ENCODE measurements at regions of chr14 and their contacts with region 1.

Region 1: GRCh38 chr14:105168979-105169507 is 467 bp upstream of the JAG2 start:
- DNase-seq: no peak
- H3K4me3 ChIP-seq: peak overlapping the region; percentile 41 to 64 (median 42)
- H3K27ac ChIP-seq: no peak overlapping the region
- H3K4me1 ChIP-seq: peaks cover 37 to 55% (median 46%) of the 10 kb centered on the region in 4 donors
- H3K27me3 ChIP-seq: peaks cover 0 to 66% (median 6%) of the 10 kb centered on the region in 4 donors
- CTCF ChIP-seq: peak in 2 of 3 experiments; percentile 34 to 40
- EP300 ChIP-seq: no peak
- POLR2A ChIP-seq: no peak

Region 2: DNA sequence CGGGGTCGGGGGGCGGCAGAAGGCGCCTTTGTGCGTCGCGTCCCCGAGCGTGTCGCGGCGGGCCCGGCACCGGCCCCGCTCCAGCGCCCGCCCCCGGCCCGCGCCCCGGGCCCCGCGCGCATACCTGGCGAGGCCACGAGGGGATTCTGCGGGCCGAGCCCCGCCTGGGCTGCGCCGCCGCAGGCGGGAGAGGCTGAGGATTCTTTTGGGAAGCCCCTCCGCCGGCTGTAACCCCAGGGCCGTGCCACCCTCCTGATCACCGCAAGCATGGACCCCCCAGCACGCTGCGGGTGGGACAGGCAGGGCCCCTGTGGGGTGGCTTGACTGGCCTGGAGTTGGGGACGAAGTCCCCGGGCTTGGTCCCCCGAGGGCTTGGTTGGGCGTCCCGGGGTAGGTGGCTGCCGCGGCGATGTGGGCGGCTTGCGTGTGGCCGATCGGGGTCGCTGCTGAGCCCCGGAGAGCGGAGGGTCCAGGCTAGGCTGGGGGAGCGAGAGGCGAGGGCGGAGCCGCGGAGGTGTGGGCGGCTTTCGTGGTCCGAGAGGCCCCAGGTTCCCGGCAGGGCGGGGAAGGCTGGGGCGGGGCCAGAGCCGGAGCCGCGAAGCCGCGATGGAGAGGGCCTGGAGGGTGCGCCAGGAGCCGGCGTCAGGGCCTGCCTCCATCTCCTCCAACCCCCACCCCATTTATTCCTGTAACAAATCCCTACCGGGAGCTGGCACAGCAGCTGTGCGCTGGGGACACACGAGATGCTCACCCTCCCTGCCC is 75.4 kb before region 1 on chr14:
- intact Hi-C with region 1: loop called (anchors 5 kb)
- DNase-seq: no peak
- H3K4me3 ChIP-seq: peak overlapping the region; percentile 76 to 86 (median 83)
- H3K27ac ChIP-seq: peak overlapping the region; percentile 88 to 95 (median 92)
- H3K4me1 ChIP-seq: peaks cover 40 to 59% (median 53%) of the 10 kb centered on the region in 4 donors
- H3K27me3 ChIP-seq: no peaks in the 10 kb centered on the region
- CTCF ChIP-seq: peak; percentile 29 to 47 (median 32)
- EP300 ChIP-seq: no peak
- POLR2A ChIP-seq: no peak

Region 3: DNA sequence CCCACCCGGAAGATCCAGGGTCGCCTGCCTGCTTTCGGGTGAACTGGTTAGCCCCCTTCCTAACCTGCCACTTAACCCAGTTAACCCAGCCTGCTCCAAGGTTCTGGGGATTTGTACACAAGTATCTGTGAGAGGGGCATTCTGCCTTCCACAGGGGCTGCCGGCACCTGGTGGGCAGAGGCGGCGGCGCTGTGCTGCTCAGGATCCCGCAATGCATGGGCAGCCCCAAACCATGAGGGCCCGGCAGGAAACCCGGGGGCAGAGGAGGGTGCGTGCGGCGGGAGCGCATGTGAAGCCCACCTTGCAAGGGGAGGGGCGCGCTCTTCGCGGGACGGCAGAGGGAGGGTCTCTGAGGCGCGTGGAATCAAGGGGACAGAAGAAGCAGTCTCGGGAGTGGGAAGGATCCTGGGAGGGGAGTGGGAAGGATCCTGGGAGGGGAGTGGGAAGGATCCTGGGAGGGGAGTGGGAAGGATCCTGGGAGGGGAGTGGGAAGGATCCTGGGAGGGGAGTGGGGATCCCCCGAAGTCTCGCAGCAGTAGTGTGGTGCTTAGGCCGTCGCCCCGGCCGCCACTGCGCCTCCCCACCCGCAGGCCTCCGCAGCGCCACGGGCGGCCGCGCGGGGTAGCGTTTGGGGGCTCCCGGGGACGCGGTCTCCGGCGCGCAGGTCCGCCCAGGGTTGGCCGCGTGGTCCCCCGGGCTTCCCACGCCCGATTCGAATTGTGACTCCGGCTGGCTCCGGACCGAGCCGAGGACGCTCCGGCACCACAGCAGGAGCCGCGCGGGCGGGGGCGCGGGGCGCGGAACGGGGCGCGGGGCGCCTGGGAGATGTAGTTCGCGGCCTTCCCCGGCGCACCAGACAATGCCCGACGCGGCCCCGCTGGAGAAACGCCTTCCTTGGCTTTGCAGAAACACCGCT is 245.7 kb after region 1 on chr14:
- intact Hi-C with region 1: no loop called
- DNase-seq: no peak
- H3K4me3 ChIP-seq: peak overlapping the region; percentile 59 to 67 (median 64)
- H3K27ac ChIP-seq: peak overlapping the region; percentile 79 to 83 (median 80)
- H3K4me1 ChIP-seq: peaks cover 25 to 48% (median 39%) of the 10 kb centered on the region in 4 donors
- H3K27me3 ChIP-seq: peaks cover 0 to 34% (median 8%) of the 10 kb centered on the region in 4 donors
- CTCF ChIP-seq: peak; percentile 79 to 91 (median 82)
- EP300 ChIP-seq: no peak
- POLR2A ChIP-seq: no peak

Measured in esophagus muscularis mucosa (tissue), 4 donors.